ENCODE measurements at regions of chr22 and their contacts with region 1.

Region 1: DNA sequence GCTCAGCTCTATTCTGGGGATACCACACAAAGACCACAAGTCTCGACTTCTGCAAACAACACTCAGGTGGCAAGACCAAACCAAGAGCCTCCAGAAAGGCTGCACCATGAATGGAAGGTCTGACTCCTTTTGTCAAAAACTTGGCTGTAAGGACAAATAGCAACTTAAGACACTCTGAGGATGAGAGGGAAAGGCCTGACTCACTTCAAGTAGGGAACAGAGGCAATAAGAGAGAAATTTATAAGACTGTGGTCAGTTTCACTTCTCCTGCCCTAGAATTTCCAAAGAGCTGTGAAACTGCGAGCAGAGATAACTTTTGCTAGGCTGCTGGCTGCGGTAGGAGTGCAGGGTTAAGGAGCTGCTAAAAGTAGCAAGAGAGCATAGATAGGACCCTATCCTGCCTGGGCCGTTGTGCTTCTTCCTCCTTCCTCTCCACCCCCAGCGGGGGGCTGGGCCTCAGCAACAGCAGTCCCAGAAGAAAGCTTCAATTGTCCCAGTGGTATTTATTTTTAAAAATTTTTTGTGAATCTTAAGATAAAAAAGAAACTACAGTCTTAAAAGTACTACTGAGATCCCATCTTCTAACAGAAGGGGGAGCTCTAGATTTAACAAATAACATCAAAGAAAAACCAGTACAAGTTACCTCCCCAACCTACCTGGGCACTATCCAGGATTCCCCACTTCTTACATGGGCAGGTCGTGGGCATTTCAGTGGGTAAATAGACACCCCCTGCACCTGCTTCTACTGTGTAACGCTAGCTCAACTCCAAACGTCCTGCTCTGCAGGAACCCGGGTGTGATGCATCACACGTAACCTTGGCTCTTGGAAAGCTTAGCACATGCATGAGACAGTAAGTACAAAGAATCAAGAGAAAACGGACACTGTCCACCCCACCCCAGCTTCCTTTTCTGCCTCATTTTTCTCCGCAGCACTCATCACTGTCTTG is 66.4 kb downstream of the SGSM3 start:
- DNase-seq: peak in 1 of 2 donors; percentile 65
- H3K4me3 ChIP-seq: peak overlapping the region; percentile 2 to 34
- H3K27ac ChIP-seq: peak overlapping the region; percentile 55 to 71
- H3K4me1 ChIP-seq: peaks cover 0 to 48% (median 22%) of the 10 kb centered on the region in 4 donors
- H3K27me3 ChIP-seq: no peaks in the 10 kb centered on the region
- CTCF ChIP-seq: peak; percentile 60 to 75

Region 2: DNA sequence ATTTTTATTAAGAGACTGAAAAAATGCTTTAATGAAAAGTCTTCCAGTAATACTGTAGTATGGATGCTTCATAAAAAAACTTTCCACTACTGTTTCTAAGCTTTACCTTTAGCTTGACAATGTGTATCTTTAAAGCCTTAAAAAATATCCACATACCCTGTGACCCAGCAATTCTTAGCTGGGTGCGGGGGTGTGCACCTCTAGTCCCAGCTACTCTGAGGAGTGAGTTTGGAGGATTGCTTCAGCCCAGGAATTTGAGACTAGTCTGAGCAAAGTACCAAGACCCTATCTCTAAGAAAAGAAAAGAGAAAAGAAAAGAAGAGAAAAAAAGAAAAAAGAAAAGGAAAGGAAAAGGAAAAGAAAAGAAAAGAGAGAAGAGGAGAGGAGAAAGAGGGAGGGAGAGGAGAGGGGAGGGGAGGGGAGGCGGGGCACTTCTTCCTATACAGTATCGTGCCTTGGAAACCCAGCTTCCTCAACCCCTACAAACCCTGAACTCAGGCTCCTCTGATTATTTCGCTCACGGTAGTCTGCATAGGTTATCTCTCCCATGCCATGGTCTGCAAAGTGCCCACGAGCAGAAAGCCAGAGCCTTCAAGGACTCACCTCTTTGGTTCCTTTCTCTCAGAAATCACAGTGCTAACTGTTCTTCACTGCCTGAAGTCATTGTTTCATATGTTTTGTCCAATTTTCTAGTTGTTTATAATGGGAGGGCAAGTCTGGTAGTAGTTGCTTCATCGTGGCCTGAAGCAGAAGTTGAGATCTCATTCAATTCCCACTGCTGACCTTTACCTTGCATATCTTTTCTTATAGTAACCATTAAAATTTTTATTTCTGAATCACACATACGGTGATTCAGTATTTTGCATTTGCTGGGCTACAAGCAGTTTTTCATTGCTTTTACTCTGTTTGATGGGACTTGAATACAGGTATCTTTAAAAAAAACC is 359.8 kb before region 1 on chr22:
- intact Hi-C with region 1: no loop called
- DNase-seq: no peak
- H3K4me3 ChIP-seq: no peak overlapping the region
- H3K27ac ChIP-seq: no peak overlapping the region
- H3K4me1 ChIP-seq: peaks cover 0 to 7% (median 2%) of the 10 kb centered on the region in 4 donors
- H3K27me3 ChIP-seq: no peaks in the 10 kb centered on the region
- CTCF ChIP-seq: no peak

Region 3: GRCh38 chr22:40376149-40376548 is 60.6 kb before region 1 on chr22:
- intact Hi-C with region 1: loop called (anchors 10 kb)
- DNase-seq: no peak
- H3K4me3 ChIP-seq: no peak overlapping the region
- H3K27ac ChIP-seq: no peak overlapping the region
- H3K4me1 ChIP-seq: peaks cover 0 to 4% (median 0%) of the 10 kb centered on the region in 4 donors
- H3K27me3 ChIP-seq: no peaks in the 10 kb centered on the region
- CTCF ChIP-seq: no peak

Region 4: DNA sequence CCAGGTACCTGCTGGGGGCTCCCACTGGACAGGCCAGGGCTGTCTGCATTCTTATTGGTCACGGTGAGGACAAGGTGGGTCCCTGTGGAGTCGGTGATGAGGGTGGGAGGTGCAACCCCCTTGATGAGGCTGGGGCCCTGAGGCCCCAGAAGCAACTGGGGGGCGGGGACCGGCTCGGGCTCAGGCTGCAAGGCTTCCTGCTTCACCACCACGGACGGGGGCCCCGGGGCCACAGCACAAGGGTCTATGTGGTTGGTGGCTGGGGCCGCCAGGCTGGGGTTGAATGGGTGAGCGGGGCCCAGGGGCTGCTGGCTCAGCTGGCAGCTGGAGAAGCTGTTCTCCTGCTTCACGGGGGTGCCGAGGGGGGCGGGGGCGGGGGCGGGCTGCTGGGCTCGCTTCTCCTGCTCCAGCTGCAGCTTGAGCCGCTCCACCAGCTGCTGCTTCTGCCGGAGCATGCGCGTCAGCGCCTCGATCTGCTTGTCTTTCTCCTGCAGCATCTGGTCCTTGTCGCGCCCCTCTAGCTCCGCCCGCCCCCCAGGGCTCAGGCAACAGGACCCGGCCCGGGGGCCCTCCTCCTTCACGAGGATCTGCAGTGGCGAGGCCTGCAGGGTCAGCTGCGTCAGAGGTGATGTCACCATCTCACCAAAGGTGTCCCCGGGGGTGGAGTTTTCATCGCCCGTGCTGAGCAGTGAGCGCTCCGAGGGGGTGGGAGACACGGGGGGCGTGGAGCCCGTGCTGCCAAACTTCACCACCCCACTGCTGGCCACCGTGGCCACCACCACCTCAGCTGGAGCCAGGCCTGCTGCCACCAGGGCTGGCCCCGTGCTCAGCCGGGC is 18.2 kb before region 1 on chr22:
- intact Hi-C with region 1: no loop called
- DNase-seq: no peak
- H3K4me3 ChIP-seq: no peak overlapping the region
- H3K27ac ChIP-seq: no peak overlapping the region
- H3K4me1 ChIP-seq: no peaks in the 10 kb centered on the region
- H3K27me3 ChIP-seq: no peaks in the 10 kb centered on the region
- CTCF ChIP-seq: no peak

Region 5: DNA sequence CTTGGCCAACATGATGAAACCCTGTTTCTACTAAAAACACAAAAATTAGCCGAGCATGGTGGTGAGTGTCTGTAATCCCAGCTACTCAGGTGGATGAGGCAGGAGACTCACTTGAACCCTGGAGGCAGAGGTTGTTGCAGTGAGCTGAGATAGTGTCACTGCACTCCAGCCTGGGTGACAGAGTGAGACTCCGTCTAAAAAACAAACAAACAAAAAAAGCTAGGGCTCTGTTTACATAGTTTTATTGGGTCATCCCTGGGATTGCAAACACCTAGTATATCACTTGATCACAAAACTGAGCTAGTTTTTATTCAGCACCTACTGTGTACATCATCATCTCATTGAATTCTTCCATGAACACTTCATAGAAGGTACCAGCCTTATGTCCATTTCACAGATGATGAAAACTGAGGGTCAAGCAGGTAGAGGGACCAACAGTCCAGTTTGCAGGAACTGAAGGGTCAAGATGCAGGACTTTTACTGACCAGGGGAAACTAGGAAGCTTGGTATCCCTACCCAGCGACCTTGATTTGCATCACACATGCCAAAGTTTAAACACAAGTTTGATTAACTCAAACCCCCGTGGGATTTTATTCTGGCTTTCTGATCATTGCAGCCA is 208.9 kb after region 1 on chr22:
- intact Hi-C with region 1: loop called (anchors 2 kb)
- DNase-seq: peak in 1 of 2 donors; percentile 7
- H3K4me3 ChIP-seq: no peak overlapping the region
- H3K27ac ChIP-seq: peak overlapping the region; percentile 66 to 68
- H3K4me1 ChIP-seq: peaks cover 0 to 7% (median 4%) of the 10 kb centered on the region in 4 donors
- H3K27me3 ChIP-seq: no peaks in the 10 kb centered on the region
- CTCF ChIP-seq: no peak